ENCODE measurements at regions of chr4 and their contacts with region 1.

Region 1: GRCh38 chr4:76504613-76505465 is 69.8 kb downstream of the SHROOM3 start:
- DNase-seq: peak; percentile 54
- CTCF ChIP-seq: peak; percentile 48

Region 2: GRCh38 chr4:76011700-76012387 is 493.0 kb before region 1 on chr4:
- in situ Hi-C with region 1: no loop called
- DNase-seq: peak; percentile 76
- CTCF ChIP-seq: no peak

Region 3: DNA sequence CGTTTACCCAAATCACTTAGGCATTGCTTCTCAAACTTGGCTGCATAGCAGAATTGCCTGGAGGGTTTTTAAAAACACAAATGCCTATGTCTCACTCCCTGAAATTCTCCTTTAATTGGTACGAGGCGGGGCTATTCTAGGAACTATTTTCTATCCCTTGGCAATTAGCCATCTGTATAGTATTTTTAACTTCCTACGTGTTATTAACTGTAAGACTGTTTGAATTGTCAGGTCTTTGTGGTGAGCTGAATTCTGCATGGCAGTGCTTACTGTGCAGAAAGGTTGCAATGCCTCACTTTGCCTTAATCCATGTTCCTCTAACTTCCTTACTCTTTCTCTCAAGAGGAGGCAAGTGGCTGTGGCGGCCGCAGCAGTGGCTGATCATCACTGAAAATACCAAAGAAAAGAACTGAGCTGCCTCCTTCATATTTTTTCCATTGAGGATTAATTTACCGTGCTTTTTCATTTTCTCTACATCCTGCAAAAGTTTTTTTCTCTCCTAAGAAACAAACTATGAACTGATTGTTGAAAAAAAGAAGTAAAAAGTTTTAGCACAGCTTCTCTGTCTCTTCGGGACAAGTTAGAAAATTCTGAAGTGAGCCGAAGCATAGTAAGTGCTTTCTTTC is 69.8 kb before region 1 on chr4 and contains the start of gene SHROOM3:
- in situ Hi-C with region 1: loop called (anchors 5 kb)
- DNase-seq: no peak
- CTCF ChIP-seq: no peak

Region 4: DNA sequence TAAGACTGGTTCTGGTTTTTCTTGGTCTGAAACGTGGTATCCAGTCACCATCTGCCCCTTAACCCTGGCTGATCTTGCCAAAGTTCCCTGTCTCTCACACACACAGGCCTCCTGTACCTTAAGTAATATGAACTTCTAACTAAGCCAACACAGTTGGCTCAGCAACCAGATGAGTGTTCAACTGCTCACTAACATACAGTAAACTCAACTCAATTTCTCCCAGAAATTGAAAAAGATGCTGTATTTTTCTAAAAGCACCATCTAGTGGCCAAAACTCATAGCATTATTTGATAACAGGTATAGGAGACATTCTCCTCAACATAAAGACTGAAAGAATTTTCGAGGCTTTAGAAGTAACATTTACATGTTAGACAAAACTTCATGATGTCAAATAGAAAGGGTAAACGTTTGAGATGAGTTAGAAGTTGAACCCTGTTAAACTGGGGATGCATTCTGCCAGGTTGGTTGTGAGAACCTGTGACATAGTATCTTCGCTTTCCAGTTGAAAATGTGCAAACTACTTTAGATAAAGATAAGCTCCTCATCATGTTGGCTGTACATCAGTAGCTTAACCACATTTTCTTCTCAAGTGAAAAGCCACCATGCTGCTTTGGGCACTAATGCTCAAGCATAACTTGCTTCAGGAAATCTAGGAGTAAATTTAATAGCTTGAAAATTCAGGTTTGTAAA is 539.8 kb after region 1 on chr4:
- in situ Hi-C with region 1: loop called (anchors 25 kb)
- DNase-seq: no peak
- CTCF ChIP-seq: peak; percentile 28

Region 5: GRCh38 chr4:77203380-77204197 is 698.8 kb after region 1 on chr4:
- in situ Hi-C with region 1: loop called (anchors 25 kb)
- DNase-seq: peak; percentile 64
- CTCF ChIP-seq: peak; percentile 63